ENCODE measurements at regions of chr11 and their contacts with region 1.

Region 1: GRCh38 chr11:120335908-120336640 is at the start of gene ARHGEF12:
- DNase-seq: peak; percentile 85 to 88
- H3K4me3 ChIP-seq: peak within 1 kb of the TSS; percentile 90
- H3K27ac ChIP-seq: peak within 1 kb of the TSS; percentile 50
- H3K4me1 ChIP-seq: peaks cover 76% of the 10 kb centered on the region
- H3K27me3 ChIP-seq: no peaks in the 10 kb centered on the region
- CTCF ChIP-seq: peak; percentile 44; the same call in 1 of the 2 replicates
- total RNA-seq, gene ARHGEF12: 61.5 and 76.5 TPM in 2 replicates

Region 2: GRCh38 chr11:120316842-120317688 is 19.0 kb before region 1 on chr11:
- CTCF ChIA-PET with region 1: no interaction called
- POLR2A ChIA-PET with region 1: no interaction called
- intact Hi-C with region 1: loop called (anchors 2 kb)
- DNase-seq: peak; percentile 87 to 97
- H3K4me3 ChIP-seq: peak overlapping the region; percentile 28; the same call in 1 of the 2 replicates
- H3K27ac ChIP-seq: 0 out of 2 replicates have a peak overlapping the region, but pooled peaks have one; percentile 15
- H3K4me1 ChIP-seq: peaks cover 22% of the 10 kb centered on the region
- H3K27me3 ChIP-seq: no peaks in the 10 kb centered on the region
- CTCF ChIP-seq: no peak

Region 3: GRCh38 chr11:120400564-120401364 is 64.7 kb after region 1 on chr11:
- CTCF ChIA-PET with region 1: interaction called, 3 read pairs
- POLR2A ChIA-PET with region 1: interaction called, 5 read pairs
- intact Hi-C with region 1: loop called (anchors 2 kb)
- DNase-seq: peak; percentile 43 to 98
- H3K4me3 ChIP-seq: peak overlapping the region; percentile 32; the same call in 1 of the 2 replicates
- H3K27ac ChIP-seq: peak overlapping the region; percentile 52
- H3K4me1 ChIP-seq: peaks cover 32% of the 10 kb centered on the region
- H3K27me3 ChIP-seq: no peaks in the 10 kb centered on the region
- CTCF ChIP-seq: no peak

Region 4: DNA sequence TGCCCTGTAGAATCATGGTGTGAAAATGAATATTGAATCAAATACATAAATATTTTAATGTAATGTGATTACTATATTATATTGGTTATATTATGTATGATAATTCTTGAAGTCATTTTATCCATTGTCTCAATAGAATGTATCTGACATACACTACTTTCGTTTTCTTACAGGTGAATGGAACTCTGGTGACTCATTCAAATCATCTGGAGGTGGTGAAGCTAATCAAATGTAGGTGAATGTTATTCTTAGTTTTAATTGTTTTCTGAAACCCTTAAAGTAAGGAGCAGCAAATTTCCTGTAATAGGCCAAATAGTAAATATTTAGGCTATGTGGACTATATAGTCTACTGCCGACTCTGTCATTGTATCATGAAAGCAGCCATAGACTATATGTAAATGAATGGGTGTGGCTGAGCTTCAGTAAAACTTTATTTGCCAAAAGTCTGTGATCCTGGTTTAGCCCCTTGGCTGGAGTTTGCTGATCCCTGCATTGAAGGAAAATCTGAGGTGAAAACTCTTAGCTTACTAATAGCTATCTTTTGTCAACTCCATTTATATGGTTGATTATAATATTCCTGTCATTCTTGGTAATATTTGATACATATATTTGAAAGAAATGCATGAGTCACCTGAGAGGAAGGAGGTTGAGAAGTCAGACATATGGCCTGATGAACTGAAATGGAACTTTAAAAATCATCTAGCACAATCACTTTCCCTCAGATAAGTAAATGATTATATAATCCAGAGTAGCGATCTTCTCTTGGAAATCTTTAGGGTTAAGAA is 88.3 kb after region 1 on chr11:
- CTCF ChIA-PET with region 1: no interaction called
- POLR2A ChIA-PET with region 1: no interaction called
- intact Hi-C with region 1: no loop called
- DNase-seq: no peak
- H3K4me3 ChIP-seq: no peak overlapping the region
- H3K27ac ChIP-seq: no peak overlapping the region
- H3K4me1 ChIP-seq: peaks cover 17% of the 10 kb centered on the region
- H3K27me3 ChIP-seq: no peaks in the 10 kb centered on the region
- CTCF ChIP-seq: no peak

Region 5: DNA sequence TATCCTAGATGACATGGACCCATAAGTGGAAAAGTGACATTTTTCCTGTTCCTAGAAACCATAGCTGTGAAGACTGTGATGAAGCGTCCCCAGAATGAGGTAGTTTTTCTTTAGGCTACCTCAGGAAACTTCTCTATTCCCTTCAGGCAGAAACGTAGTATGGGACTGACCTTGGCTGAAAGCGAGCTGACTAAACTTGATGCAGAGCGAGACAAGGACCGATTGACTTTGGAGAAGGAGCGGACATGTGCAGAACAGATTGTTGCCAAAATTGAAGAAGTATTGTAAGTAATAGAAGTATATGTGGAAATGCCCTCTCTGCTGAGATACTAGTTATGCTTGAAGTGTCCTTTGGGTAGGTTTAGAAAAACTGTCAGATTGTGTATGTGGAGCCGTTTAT is 110.7 kb after region 1 on chr11:
- CTCF ChIA-PET with region 1: no interaction called
- POLR2A ChIA-PET with region 1: interaction called, 10 read pairs
- intact Hi-C with region 1: no loop called
- DNase-seq: no peak
- H3K4me3 ChIP-seq: no peak overlapping the region
- H3K27ac ChIP-seq: no peak overlapping the region
- H3K4me1 ChIP-seq: no peaks in the 10 kb centered on the region
- H3K27me3 ChIP-seq: no peaks in the 10 kb centered on the region
- CTCF ChIP-seq: no peak

Region 6: DNA sequence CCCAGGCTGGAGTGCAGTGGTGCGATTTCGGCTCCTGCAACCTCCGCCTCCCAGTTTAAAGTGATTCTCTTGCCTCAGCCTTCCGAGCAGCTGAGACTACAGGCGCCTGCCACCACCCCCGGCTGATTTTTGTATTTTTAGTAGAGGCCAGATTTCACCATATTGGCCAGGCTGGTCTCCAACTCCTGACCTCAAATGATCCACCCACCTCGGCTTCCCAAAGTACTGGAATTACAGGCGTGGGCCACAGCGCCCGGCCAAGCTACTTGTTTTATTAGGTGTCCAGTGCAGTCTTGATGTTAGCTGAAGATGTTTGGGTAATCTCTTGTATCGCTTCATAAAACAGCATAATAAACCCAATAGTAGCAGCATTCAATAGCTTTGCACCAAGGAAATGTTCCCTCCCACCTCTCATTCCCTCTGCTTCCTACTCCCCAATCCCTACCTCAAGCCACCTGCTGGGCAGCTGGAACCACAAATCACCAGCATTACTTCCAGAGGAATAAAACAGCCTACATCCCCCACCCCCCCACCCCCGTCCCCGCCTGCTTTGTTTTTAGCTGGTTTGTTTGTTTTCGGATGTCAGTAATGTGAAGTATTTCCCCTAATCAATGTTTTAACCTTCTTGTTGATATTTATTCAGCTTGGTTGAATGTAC is 164.5 kb after region 1 on chr11:
- CTCF ChIA-PET with region 1: no interaction called
- POLR2A ChIA-PET with region 1: interaction called, 4 read pairs
- intact Hi-C with region 1: loop called (anchors 10 kb)
- DNase-seq: no peak
- H3K4me3 ChIP-seq: no peak overlapping the region
- H3K27ac ChIP-seq: no peak overlapping the region
- H3K4me1 ChIP-seq: no peaks in the 10 kb centered on the region
- H3K27me3 ChIP-seq: peaks cover 12% of the 10 kb centered on the region
- CTCF ChIP-seq: no peak